HEK293T (cell line): ENCODE measurements at regions of chr7 and their contacts with region 1.

Region 1: GRCh38 chr7:95684037-95684436 is 87.7 kb upstream of the PDK4 start:
- DNase-seq: peak; percentile 14

Region 2: DNA sequence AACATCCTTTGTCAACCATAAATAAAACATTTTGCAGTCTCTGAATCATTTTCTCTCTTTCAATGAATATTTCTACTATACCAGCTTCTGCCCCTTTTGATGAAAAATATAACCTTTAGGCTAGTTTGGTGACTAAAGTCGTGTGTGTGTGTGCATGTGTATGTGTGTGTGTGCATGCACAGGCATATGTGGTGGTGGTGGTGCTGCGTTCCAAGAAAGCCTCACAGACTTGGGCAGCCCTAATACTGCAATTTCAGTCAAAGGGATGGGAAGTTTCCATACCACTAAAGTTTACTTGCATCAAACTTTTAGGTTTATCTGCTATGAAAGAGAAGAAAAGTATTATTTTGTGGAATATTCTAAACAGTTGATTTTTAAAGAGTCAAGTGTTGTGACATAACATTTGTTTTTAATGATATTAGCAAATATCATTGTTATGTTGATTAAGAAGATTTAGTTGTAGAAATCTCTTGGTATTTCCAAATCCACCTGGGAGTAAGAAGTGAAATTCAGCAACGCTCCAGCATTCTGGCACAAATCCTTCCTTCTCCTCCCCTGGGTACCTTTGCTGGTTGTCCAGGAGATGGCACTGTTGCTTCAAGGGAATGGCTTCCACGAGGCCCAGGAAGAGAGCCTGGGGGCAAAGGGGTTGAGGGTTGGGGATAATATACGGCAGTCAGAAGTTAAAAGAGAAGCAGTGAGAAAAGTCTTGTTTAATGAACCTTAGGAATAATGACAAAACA is 156.8 kb before region 1 on chr7:
- CTCF ChIA-PET with region 1: interaction called, 46 read pairs
- POLR2A ChIA-PET with region 1: no interaction called
- DNase-seq: peak; percentile 80